ENCODE measurements at regions of chr7 and their contacts with region 1.

Region 1: GRCh38 chr7:17769918-17770317 is 170.4 kb downstream of the SNX13 start:
- DNase-seq: peak; percentile 73 to 78
- H3K4me3 ChIP-seq: no peak overlapping the region
- H3K4me3 Mint-ChIP-seq: no peak overlapping the region
- H3K27ac Mint-ChIP-seq: no peak overlapping the region
- H3K4me1 ChIP-seq: peaks cover 8% of the 10 kb centered on the region
- H3K4me1 Mint-ChIP-seq: no peaks in the 10 kb centered on the region
- H3K27me3 ChIP-seq: no peaks in the 10 kb centered on the region
- H3K27me3 Mint-ChIP-seq: no peaks in the 10 kb centered on the region
- CTCF ChIP-seq: peak; percentile 70 to 88

Region 2: GRCh38 chr7:17680943-17681351 is 89.0 kb before region 1 on chr7:
- CTCF ChIA-PET with region 1: interaction called, 4 read pairs
- POLR2A ChIA-PET with region 1: no interaction called
- intact Hi-C with region 1: loop called (anchors 2 kb)
- DNase-seq: peak in 1 of 2 experiments; percentile 15
- H3K4me3 ChIP-seq: no peak overlapping the region
- H3K4me3 Mint-ChIP-seq: no peak overlapping the region
- H3K27ac Mint-ChIP-seq: no peak overlapping the region
- H3K4me1 ChIP-seq: peaks cover 20% of the 10 kb centered on the region
- H3K4me1 Mint-ChIP-seq: peaks cover 10% of the 10 kb centered on the region
- H3K27me3 ChIP-seq: no peaks in the 10 kb centered on the region
- H3K27me3 Mint-ChIP-seq: no peaks in the 10 kb centered on the region
- CTCF ChIP-seq: peak; percentile 9 to 64

Region 3: DNA sequence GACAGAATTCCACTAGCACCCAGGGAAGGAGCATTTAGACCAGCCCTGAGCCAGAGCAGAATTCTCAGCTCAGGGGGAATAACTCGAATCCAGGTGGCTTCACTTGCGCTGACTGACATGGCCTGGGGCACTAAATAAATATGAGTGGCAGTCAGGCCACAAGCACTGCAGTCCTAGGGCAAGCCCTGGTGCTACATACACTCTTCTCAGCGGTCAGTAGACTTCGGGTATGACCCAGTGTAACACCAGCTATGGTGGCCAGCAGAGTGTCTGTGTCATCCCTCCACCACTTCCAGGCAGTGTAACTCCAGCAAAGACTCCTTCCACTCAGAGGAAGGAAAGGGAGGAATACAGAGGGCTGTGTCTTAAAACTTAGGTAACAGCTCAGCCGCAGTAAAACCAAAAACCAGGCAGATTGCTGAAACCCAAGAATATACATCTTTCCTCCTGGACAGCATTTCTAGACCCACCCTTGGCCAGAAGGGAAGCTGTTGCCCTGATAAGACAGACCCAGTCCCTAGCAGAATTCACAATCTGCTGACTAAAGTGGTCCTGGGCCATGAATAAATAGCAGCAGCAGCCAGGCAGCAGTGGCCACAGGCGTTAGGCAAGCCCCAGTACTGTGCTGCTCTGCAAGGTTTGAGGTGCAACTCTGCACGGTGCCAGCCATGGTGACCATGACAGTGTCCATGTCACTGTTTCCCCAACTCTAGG is 93.3 kb after region 1 on chr7:
- CTCF ChIA-PET with region 1: interaction called, 3 read pairs
- POLR2A ChIA-PET with region 1: no interaction called
- intact Hi-C with region 1: loop called (anchors 5 kb)
- DNase-seq: peak in 1 of 2 experiments; percentile 16
- H3K4me3 ChIP-seq: no peak overlapping the region
- H3K4me3 Mint-ChIP-seq: no peak overlapping the region
- H3K27ac Mint-ChIP-seq: no peak overlapping the region
- H3K4me1 ChIP-seq: no peaks in the 10 kb centered on the region
- H3K4me1 Mint-ChIP-seq: no peaks in the 10 kb centered on the region
- H3K27me3 ChIP-seq: no peaks in the 10 kb centered on the region
- H3K27me3 Mint-ChIP-seq: no peaks in the 10 kb centered on the region
- CTCF ChIP-seq: no peak

Region 4: DNA sequence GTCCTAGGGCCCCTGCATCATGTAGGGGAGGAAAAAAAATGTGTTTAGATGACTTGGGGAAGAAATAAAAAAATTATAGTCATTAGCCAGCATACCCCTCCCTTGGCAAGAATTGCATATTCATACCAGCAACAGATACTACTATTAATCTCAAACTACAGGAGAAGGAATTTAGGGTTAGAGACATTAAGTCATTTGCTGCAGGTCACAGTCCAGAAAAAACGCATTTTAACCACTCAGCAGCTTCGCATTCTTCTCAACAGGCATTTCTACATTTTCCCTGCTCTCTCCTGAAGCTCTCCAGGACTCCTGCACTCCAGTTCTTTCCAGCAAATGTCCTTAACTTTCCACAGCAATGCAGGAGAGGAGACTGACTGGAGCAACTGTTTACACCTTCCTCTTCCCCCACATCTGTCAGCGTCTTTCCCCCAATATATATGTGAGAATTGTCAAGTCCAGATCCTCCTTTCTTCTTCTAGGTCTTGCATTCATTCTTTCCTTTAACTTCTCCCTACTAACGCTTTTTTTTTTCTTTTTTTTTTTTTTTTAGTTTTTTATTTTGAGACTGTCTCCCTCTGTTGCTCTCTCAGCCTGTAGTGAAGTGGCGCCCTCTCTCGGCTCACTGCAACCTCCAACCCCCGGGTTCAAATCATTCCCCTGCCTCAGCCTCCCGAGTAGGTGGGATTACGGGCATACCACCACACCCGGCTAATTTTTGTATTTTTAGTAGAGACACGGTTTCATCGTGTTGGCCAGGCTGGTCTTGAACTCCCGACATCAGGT is 222.1 kb after region 1 on chr7:
- CTCF ChIA-PET with region 1: interaction called, 4 read pairs
- POLR2A ChIA-PET with region 1: no interaction called
- intact Hi-C with region 1: loop called (anchors 2 kb)
- DNase-seq: peak in 1 of 2 experiments; percentile 14
- H3K4me3 ChIP-seq: no peak overlapping the region
- H3K4me3 Mint-ChIP-seq: no peak overlapping the region
- H3K27ac Mint-ChIP-seq: no peak overlapping the region
- H3K4me1 ChIP-seq: no peaks in the 10 kb centered on the region
- H3K4me1 Mint-ChIP-seq: peaks cover 3% of the 10 kb centered on the region
- H3K27me3 ChIP-seq: no peaks in the 10 kb centered on the region
- H3K27me3 Mint-ChIP-seq: no peaks in the 10 kb centered on the region
- CTCF ChIP-seq: peak in 1 of 2 experiments; percentile 29

Region 5: DNA sequence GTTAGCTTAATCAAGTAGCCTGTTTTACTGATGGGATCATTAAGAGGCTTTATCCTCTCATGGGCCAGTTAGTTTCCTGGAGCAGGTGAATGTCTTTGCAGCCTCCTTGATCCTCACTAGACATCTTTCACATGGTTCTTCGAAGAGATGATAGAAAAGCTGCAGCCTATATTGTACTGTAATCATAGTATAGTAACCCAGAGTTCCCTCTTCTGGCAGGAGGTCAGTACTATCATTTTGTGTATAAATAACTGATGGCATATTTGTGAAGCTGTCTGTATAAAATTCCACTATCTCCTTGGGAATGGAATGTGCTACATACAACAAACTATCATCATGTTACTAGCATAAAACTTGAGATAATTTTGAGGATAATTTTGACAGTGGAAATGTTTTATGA is 381.5 kb after region 1 on chr7:
- CTCF ChIA-PET with region 1: interaction called, 3 read pairs
- POLR2A ChIA-PET with region 1: no interaction called
- intact Hi-C with region 1: loop called (anchors 1 kb)
- DNase-seq: peak in 1 of 2 experiments; percentile 5
- H3K4me3 ChIP-seq: no peak overlapping the region
- H3K4me3 Mint-ChIP-seq: no peak overlapping the region
- H3K27ac Mint-ChIP-seq: no peak overlapping the region
- H3K4me1 ChIP-seq: no peaks in the 10 kb centered on the region
- H3K4me1 Mint-ChIP-seq: no peaks in the 10 kb centered on the region
- H3K27me3 ChIP-seq: no peaks in the 10 kb centered on the region
- H3K27me3 Mint-ChIP-seq: no peaks in the 10 kb centered on the region
- CTCF ChIP-seq: no peak

Region 6: DNA sequence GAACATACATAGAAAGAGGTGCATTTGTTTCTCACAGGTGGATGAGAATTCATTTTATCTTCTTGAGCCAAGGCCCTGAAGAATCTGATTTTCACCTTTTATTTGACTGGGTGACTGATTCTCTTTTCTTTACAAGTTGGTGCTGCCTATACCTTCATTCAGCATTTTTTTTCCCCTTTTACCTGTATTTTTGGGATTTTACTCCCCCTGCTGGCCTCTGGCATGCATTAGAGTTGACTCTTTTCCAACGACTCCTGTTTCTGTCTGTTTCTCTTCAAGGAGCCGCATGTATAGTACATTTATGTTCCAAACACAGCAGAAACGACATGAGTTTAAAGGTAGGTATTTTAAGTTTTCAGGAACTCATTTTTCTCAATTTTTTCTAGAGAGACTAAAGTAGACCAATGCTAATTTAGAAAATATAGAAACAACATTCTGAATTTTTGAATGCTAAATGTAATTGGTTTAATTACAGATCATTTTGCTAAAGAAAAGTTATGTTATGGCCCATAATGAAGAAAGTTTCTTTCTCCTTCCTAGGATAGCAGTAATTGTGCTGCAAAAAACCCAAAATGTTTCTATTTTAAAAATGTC is 575.8 kb after region 1 on chr7:
- CTCF ChIA-PET with region 1: interaction called, 9 read pairs
- POLR2A ChIA-PET with region 1: no interaction called
- intact Hi-C with region 1: loop called (anchors 1 kb)
- DNase-seq: peak in 1 of 2 experiments; percentile 64
- H3K4me3 ChIP-seq: no peak overlapping the region
- H3K4me3 Mint-ChIP-seq: no peak overlapping the region
- H3K27ac Mint-ChIP-seq: no peak overlapping the region
- H3K4me1 ChIP-seq: no peaks in the 10 kb centered on the region
- H3K4me1 Mint-ChIP-seq: no peaks in the 10 kb centered on the region
- H3K27me3 ChIP-seq: no peaks in the 10 kb centered on the region
- H3K27me3 Mint-ChIP-seq: peaks cover 4% of the 10 kb centered on the region
- CTCF ChIP-seq: peak; percentile 76